Posterior vena cava (tissue), 2 donors: ENCODE measurements at regions of chrX and their contacts with region 1.

Region 1: GRCh38 chrX:79704325-79704724 is 310.2 kb upstream of the TBX22 start:
- DNase-seq: no peak

Region 2: DNA sequence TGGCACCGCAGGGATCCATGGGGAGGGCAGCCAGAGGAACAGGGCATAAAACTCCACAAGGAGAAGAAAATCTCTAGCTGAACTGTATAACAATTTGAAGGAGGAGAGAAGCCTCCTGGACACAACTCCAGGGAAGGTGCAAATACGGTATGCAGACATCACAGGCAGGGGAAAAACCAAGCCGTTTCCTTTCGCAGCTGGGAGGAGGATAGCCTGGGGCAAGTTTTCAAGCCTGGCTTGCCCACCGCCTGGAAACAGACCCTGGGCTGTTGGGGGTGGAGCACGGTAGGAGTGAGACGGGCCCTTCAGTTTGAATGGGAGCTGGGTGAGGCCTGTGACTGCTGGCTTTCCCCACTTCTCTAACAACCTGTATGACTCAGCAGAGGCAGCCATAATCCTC is 1521.4 kb before region 1 on chrX:
- intact Hi-C with region 1: no loop called
- DNase-seq: no peak

Region 3: GRCh38 chrX:78643096-78643495 is 1061.2 kb before region 1 on chrX:
- intact Hi-C with region 1: loop called in 1 of 2 experiments (anchors 5 kb)
- DNase-seq: no peak

Region 4: GRCh38 chrX:79933938-79934337 is 229.6 kb after region 1 on chrX:
- intact Hi-C with region 1: no loop called
- DNase-seq: no peak